Panc1 (cell line): ENCODE measurements at regions of chr10 and their contacts with region 1.

Region 1: DNA sequence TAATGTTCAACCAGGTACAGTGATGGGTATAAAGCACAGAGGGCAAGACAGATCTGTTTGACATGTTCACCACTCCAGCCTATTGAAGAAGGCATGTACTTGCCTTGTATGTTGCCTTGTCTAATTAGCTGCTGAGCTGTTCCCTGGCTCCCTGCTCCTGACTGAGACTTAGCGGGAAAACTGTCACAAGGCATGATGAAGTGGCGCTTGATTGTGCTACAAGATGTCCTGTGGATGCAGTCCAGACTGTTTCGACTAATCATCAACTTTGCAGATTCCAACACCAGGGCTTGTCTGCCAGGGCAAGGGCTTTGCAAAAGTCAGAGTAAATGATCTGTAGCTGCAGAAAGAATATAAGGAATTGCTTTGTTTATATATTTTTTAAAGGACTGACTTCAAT is 136.2 kb upstream of the NRBF2 start:
- DNase-seq: no peak
- ATAC-seq: no peak
- H3K4me3 ChIP-seq: no peak overlapping the region
- H3K27ac ChIP-seq: no peak overlapping the region
- H3K4me1 ChIP-seq: no peaks in the 10 kb centered on the region
- H3K27me3 ChIP-seq: peaks cover 23% of the 10 kb centered on the region
- CTCF ChIP-seq: no peak

Region 2: GRCh38 chr10:63068246-63068645 is 71.3 kb after region 1 on chr10:
- CTCF ChIA-PET with region 1: no interaction called
- POLR2A ChIA-PET with region 1: interaction called, 15 read pairs
- in situ Hi-C with region 1: no loop called
- intact Hi-C with region 1: no loop called
- DNase-seq: no peak
- ATAC-seq: no peak
- H3K4me3 ChIP-seq: no peak overlapping the region
- H3K27ac ChIP-seq: no peak overlapping the region
- H3K4me1 ChIP-seq: no peaks in the 10 kb centered on the region
- H3K27me3 ChIP-seq: peaks cover 46% of the 10 kb centered on the region
- CTCF ChIP-seq: no peak

Region 3: GRCh38 chr10:63588436-63589167 is 591.7 kb after region 1 on chr10:
- CTCF ChIA-PET with region 1: no interaction called
- POLR2A ChIA-PET with region 1: no interaction called
- in situ Hi-C with region 1: no loop called
- intact Hi-C with region 1: no loop called
- DNase-seq: peak; percentile 7
- ATAC-seq: no peak
- H3K4me3 ChIP-seq: no peak overlapping the region
- H3K27ac ChIP-seq: no peak overlapping the region
- H3K4me1 ChIP-seq: peaks cover 6% of the 10 kb centered on the region
- H3K27me3 ChIP-seq: no peaks in the 10 kb centered on the region
- CTCF ChIP-seq: no peak